Ascending aorta (tissue), 2 donors: ENCODE measurements at regions of chr7 and their contacts with region 1.

Region 1: DNA sequence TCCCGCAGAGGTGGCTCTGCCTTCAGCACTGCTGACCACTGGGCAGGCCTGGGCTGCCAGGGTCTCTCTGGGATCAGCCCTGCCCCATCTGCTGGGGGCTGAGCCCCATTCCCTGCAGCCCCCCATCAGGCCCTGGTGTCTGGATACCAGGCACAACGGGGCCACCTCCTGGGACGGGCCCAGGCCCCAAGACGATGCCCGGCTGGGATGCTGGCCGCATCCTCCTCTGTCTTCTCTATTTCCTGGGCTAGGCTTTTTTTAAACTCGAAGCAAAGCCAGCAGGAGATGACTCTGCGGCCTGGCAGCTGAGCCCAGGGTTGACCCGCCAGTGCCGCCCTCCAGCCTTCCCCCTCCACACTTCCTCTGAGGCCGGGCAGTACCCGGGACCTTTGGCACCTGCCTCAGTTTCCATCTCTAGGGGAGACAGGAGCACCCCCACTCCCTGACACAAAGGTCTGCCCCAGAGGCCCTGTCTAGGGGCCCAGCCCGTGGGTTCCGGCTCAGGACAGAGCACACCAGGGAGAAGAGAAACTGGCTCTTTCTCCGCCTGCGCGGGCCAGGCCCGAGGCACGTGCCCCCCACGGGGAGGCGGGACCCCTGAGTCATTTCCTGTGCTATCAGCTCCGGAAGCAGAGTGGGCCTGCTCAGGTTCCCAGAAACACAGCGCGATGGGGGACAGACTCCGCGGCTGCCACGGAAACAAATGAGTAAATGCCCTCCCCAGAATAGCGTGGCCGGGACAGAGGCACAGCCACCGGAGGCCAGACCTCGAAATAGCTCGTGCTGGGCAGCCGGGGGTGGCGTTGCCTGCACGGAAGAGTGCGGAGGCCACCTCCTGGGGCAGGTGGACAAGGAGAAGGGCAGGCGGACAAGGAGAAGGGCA is 84.6 kb upstream of the PDGFA start:
- DNase-seq: peak; percentile 94 to 98
- H3K4me3 ChIP-seq: peak overlapping the region in 1 of 2 donors; percentile 34
- H3K27ac ChIP-seq: peak overlapping the region; percentile 98 to 99
- H3K4me1 ChIP-seq: peaks cover 20 to 60% of the 10 kb centered on the region in 2 donors
- H3K27me3 ChIP-seq: no peaks in the 10 kb centered on the region
- CTCF ChIP-seq: peak in 2 of 3 experiments; percentile 26 to 62

Region 2: DNA sequence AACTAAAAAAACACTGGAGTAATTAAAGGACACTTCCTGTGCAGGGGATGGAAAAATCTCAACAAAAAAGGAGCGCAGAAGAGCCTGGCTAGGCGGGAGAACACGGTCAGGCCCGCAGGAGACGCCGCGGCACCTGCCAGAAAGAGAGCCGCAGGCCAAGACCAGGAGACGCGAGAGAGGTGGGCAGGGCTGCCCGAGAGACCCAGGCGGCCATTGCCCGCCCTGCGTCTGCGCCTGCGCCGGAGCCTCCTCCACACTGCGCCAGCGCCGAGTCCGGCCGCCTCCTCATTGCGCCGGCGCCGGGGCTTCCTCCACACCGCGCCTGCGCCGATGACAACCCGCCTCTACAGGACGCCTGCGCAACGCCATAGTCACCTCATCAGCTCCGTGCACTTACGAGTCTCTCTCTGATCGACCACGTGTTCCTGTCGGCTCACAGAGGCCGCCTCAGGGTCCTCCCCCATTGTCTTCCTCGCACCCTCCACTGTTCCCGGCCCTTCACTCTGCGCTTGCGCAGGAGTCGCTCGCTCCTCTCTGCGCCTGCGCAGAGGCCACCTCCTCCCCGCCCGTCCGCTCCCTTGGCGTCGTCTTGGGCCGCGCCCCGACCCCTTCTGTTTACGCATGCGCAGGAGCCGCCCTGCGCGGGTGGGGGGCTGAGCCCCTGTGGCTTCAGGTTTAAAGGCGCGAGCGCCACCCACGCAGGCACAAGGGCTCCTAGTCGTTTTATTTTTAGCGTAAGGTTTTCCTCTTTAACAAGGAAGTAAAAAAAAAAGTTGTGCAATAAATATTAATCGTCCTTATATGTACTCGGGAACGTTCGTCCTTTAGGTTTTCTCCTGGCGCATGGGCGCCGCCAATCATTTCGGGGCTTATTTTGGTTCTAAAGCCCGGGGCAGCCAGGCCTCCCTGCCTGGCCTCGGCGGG is 455.0 kb before region 1 on chr7:
- intact Hi-C with region 1: loop called (anchors 5 kb)
- DNase-seq: peak; percentile 96 to 99
- H3K4me3 ChIP-seq: peak overlapping the region; percentile 60 to 67
- H3K27ac ChIP-seq: peak overlapping the region; percentile 90 to 97
- H3K4me1 ChIP-seq: peaks cover 0 to 7% of the 10 kb centered on the region in 2 donors
- H3K27me3 ChIP-seq: no peaks in the 10 kb centered on the region
- CTCF ChIP-seq: no peak

Region 3: DNA sequence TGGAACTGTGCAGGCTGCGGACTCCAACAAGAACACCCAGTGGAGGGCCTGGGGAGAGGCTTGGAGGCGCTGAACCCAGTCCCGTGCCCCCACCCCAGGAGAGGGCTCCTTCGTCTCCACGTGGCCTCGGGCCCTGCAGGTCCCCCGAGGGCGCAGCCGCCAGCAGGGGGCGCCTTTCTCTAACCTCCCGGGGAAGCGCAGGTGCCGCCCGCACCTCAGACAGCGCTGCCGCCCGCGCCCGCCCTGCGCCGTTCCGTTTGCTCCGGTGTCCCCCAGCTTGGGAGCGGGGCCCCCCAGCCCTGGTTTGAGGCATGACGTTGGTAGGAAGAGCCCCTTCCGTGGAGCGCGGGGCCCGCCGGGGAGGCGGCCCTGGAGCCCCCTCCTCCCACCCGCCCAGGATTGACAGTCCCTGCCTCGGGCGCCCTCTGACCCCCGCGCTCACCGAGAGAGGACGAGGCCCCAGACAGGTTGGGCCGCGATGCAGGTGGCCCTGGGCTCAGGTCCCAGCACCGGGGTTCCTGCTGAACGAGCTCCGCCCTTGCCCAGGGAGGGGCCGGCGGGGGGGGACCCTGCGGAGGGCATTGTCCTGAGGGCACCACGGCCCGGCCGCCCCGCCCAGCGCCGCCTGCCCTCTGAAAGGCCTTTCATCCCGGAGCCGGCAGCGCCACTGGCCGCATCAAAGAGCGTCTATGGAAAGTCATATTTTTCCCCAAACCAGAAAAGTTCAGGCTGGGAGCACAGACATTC is 271.4 kb before region 1 on chr7:
- intact Hi-C with region 1: loop called (anchors 2 kb)
- DNase-seq: peak in 1 of 2 donors; percentile 85
- H3K4me3 ChIP-seq: peak overlapping the region; percentile 45 to 64
- H3K27ac ChIP-seq: peak overlapping the region; percentile 15 to 40
- H3K4me1 ChIP-seq: peaks cover 10 to 13% of the 10 kb centered on the region in 2 donors
- H3K27me3 ChIP-seq: no peaks in the 10 kb centered on the region
- CTCF ChIP-seq: peak; percentile 80 to 96 (median 93)

Region 4: DNA sequence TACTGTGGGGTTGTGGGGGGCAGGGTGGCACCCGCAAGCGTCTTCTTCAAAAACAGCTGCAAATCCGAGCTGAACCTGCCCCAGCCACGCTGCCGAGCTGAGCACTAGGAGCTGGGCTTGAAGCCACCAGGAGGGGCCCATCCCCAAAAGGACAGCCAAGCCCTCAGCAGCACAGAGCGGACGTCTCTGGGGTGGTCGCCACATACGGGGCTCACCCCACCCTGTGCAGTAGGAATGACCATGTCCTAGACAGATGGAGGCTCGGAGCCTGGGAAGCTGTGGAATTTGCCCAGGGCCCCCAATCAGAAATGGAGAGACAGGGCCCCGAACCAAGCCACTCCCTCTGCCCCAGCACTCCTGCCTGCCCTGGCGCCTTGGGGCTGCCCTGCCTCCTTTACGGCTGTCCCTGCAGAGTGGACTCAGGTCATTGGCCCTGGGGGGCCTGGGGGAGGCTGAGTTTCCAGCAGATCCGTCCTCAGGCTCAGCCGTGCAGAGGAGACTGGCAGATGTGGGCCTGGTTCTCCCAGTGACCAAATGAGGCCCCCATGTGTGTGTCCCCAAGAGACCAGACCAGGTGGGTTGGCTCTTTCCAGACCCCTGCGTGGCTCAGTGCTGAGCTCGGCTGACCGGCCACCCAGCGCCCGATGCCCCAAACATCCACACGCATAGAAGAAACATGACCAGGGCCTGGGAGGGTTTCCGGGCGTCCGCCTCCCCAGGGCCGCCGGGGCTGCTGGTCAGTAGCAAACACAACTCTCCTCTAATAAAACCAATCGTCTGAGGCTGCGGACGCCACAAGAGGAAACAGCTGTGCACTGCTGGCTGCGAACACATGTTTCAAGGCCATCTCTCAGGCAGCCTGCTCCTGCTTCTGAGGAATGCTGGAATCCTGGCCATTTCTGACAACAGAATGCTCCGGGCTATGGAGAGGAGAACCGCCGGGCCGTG is 139.5 kb before region 1 on chr7:
- intact Hi-C with region 1: no loop called
- DNase-seq: no peak
- H3K4me3 ChIP-seq: no peak overlapping the region
- H3K27ac ChIP-seq: no peak overlapping the region
- H3K4me1 ChIP-seq: peaks cover 0 to 11% of the 10 kb centered on the region in 2 donors
- H3K27me3 ChIP-seq: no peaks in the 10 kb centered on the region
- CTCF ChIP-seq: no peak

Region 5: GRCh38 chr7:518630-519483 is 85.4 kb before region 1 on chr7:
- intact Hi-C with region 1: loop called (anchors 1 kb)
- DNase-seq: peak; percentile 30 to 88
- H3K4me3 ChIP-seq: peak overlapping the region; percentile 77 to 83
- H3K27ac ChIP-seq: peak overlapping the region; percentile 97
- H3K4me1 ChIP-seq: peaks cover 21 to 47% of the 10 kb centered on the region in 2 donors
- H3K27me3 ChIP-seq: no peaks in the 10 kb centered on the region
- CTCF ChIP-seq: no peak

Region 6: GRCh38 chr7:557558-557881 is 46.7 kb before region 1 on chr7:
- intact Hi-C with region 1: loop called (anchors 1 kb)
- DNase-seq: peak; percentile 46 to 89
- H3K4me3 ChIP-seq: no peak overlapping the region
- H3K27ac ChIP-seq: peak overlapping the region; percentile 84 to 91
- H3K4me1 ChIP-seq: peaks cover 8 to 15% of the 10 kb centered on the region in 2 donors
- H3K27me3 ChIP-seq: no peaks in the 10 kb centered on the region
- CTCF ChIP-seq: no peak

Region 7: GRCh38 chr7:867672-868486 is 263.6 kb after region 1 on chr7:
- intact Hi-C with region 1: loop called (anchors 5 kb)
- DNase-seq: peak; percentile 63 to 94
- H3K4me3 ChIP-seq: peak overlapping the region; percentile 32 to 37
- H3K27ac ChIP-seq: peak overlapping the region; percentile 92 to 95
- H3K4me1 ChIP-seq: peaks cover 9 to 30% of the 10 kb centered on the region in 2 donors
- H3K27me3 ChIP-seq: no peaks in the 10 kb centered on the region
- CTCF ChIP-seq: peak in 2 of 3 experiments; percentile 18 to 21